ENCODE measurements at regions of chr11 and their contacts with region 1.

Region 1: GRCh38 chr11:77091146-77091940 is 11.3 kb upstream of the OMP start:
- DNase-seq: peak; percentile 49 to 86
- H3K4me3 ChIP-seq: no peak overlapping the region
- H3K4me1 ChIP-seq: no peaks in the 10 kb centered on the region
- H3K27me3 ChIP-seq: no peaks in the 10 kb centered on the region

Region 2: DNA sequence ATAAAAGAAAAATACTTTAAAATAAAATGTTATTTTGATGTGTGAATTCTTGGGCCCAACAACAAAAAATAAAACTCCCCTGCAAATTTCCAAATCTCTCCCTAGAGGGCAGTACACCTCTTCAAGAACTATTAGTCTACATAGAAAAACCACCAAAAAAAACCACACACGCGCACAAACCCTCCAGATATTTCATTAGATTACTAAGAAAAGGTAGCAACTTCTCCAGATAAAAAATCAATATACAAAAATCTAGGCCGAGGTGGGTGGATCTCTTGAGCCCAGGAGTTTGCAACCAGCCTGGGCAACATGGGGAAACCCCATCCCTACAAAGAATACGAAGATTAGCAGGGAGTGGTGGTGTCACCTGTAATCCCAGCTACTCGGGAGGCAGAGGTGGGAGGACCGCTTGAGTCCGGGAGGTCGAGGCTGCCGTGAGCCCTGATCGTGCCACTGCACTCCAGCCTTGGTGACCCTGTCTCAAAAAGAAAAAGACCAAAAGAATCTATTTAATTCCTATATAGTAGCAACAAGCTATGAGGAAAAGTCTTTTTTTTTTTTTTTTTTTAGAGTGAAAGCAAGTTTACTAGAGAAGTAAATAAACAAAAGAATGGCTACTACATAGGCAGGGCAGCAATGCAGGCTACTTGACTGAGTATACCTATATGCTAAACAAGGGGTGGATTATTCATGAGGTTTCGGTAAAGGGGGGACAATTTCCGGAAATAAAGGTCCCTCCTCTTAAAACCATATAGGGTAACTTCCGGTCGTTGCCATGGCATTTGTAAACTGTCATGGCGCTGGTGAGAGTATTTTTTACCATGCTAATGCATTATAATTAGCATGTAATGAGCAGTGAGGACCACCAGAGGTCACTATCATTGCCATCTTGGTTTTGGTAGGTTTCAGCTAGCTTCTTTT is 44.1 kb before region 1 on chr11:
- in situ Hi-C with region 1: loop called (anchors 5 kb)
- DNase-seq: peak; percentile 85
- H3K4me3 ChIP-seq: peak overlapping the region; percentile 14
- H3K4me1 ChIP-seq: peaks cover 19% of the 10 kb centered on the region
- H3K27me3 ChIP-seq: no peaks in the 10 kb centered on the region

Region 3: GRCh38 chr11:77346906-77347603 is 255.7 kb after region 1 on chr11:
- in situ Hi-C with region 1: no loop called
- DNase-seq: no peak
- H3K4me3 ChIP-seq: no peak overlapping the region
- H3K4me1 ChIP-seq: no peaks in the 10 kb centered on the region
- H3K27me3 ChIP-seq: no peaks in the 10 kb centered on the region